H1 (cell line): ENCODE measurements at regions of chr14 and their contacts with region 1.

Region 1: DNA sequence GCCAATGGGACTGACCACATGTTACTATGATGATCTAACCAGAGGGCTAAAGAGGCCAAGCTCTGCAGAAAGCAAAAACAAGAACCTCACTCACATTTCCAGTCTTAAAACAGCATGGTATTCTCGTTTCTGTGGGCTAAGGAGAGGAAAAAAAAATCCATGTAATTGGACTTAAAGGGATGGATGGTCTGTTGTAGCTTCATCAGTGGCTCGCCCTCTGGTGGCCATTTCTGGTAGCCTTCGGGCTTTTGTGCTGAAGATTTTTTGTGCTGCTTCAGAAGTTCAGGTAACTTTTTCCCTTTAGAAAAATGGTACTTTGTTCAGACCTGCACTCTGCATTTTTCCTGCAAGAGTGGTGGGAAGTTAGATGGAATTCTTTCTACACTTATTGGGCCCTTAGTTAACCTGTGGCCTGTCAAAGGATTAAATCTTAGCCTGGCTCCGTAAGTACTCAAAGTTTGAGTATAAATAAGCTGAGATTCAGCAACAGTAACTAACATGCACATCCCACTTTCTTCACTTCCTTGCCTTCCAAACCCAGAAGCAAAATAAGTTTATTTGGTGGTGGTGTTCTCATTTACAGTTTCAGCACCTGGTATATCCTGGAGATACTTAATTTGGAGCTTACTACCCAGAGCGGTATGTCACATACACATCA is 22.3 kb downstream of the DCAF4 start:
- DNase-seq: peak in 1 of 2 experiments; percentile 87
- H3K4me3 ChIP-seq: no peak overlapping the region
- H3K27ac ChIP-seq: no peak overlapping the region
- H3K4me1 ChIP-seq: no peaks in the 10 kb centered on the region
- H3K27me3 ChIP-seq: no peaks in the 10 kb centered on the region
- CTCF ChIP-seq: peak; percentile 66 to 84 (median 67)
- EP300 ChIP-seq: no peak
- POLR2A ChIP-seq: no peak
- RAD21 ChIP-seq: peak; percentile 65 to 75

Region 2: GRCh38 chr14:72535485-72535884 is 413.1 kb before region 1 on chr14:
- CTCF ChIA-PET with region 1: no interaction called
- POLR2A ChIA-PET with region 1: no interaction called
- DNase-seq: no peak
- H3K4me3 ChIP-seq: no peak overlapping the region
- H3K27ac ChIP-seq: no peak overlapping the region
- H3K4me1 ChIP-seq: no peaks in the 10 kb centered on the region; a peak in 1 of 7 replicates
- H3K27me3 ChIP-seq: no peaks in the 10 kb centered on the region
- CTCF ChIP-seq: no peak
- EP300 ChIP-seq: no peak
- POLR2A ChIP-seq: no peak
- RAD21 ChIP-seq: no peak

Region 3: DNA sequence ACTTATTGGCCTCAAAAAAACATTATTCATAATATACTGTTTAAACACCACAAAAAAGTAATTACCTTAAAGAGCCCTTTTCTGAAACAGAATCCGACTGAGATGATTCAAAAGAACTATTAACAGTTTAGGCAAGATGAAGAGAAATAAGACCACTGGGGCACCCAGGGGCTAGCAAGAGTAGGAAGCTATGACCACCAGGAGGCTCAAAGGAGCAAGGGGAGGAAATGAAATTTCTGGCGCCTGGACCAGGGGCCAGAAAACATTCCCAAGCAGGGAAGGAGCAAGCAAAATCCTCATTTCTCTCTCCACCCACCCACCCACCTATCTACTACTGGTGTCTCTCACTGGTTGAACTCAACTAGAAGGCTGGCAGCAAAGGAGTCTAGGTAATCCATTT is 28.6 kb before region 1 on chr14:
- CTCF ChIA-PET with region 1: interaction called, 14 read pairs
- POLR2A ChIA-PET with region 1: no interaction called
- DNase-seq: no peak
- H3K4me3 ChIP-seq: no peak overlapping the region
- H3K27ac ChIP-seq: no peak overlapping the region
- H3K4me1 ChIP-seq: no peaks in the 10 kb centered on the region
- H3K27me3 ChIP-seq: peaks cover 0 to 3% (median under 1%) of the 10 kb centered on the region in 4 experiments; a peak in 2 of 7 replicates
- CTCF ChIP-seq: peak; percentile 43 to 64 (median 54)
- EP300 ChIP-seq: no peak
- POLR2A ChIP-seq: no peak
- RAD21 ChIP-seq: peak; percentile 27 to 63; a peak in 3 of 4 replicates

Region 4: DNA sequence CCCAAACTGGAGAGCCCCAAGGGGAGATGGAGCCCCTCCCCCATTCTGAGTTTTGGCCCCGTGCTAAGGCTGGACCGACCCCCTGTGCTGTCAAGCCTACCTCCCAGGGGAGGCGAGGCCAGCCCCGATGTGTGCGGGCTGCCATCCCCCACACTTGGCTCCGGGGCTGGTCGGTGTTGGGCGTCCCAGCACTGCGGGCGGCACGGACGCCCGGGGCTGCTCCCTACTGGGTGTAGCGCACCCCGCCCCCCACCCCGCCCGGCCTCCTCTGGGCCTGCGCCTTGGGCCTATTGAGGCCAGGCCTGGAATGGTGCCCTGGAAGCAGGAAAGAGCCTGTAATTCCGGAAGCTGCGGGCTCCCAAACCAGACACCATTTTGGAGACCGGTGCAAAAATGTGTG is 19.7 kb before region 1 on chr14:
- CTCF ChIA-PET with region 1: interaction called, 16 read pairs
- POLR2A ChIA-PET with region 1: no interaction called
- DNase-seq: no peak
- H3K4me3 ChIP-seq: no peak overlapping the region
- H3K27ac ChIP-seq: no peak overlapping the region
- H3K4me1 ChIP-seq: peaks cover 0 to 3% (median 2%) of the 10 kb centered on the region in 4 experiments; a peak in 5 of 7 replicates
- H3K27me3 ChIP-seq: peaks cover 0 to 10% (median 8%) of the 10 kb centered on the region in 4 experiments; a peak in 5 of 7 replicates
- CTCF ChIP-seq: no peak
- EP300 ChIP-seq: no peak
- POLR2A ChIP-seq: no peak
- RAD21 ChIP-seq: no peak

Region 5: DNA sequence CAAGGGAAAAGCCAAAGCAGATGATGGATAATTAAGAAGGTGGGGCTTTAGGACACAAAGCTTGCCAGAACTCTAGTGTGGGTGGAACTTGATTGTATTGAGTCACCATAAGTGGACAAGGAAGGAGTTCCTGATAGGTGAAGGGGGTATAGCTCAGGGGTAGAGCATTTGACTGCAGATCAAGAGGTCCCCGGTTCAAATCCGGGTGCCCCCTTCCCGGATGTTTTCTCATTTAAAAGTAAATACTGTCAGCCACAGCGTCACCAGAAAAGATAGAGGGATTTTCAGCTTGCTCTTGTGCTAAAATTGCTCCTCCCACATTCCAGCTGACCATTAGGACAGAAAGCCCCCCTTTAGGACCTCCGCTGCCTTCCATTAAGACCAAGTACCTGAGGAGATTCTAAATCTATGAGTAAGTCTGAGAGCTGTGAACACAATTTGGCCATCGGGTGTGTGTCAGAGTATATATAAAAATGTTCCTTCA is 14.3 kb after region 1 on chr14:
- CTCF ChIA-PET with region 1: interaction called, 25 read pairs
- POLR2A ChIA-PET with region 1: interaction called, 4 read pairs
- DNase-seq: peak; percentile 54 to 67
- H3K4me3 ChIP-seq: no peak overlapping the region
- H3K27ac ChIP-seq: no peak overlapping the region
- H3K4me1 ChIP-seq: no peaks in the 10 kb centered on the region
- H3K27me3 ChIP-seq: no peaks in the 10 kb centered on the region
- CTCF ChIP-seq: no peak
- EP300 ChIP-seq: no peak
- POLR2A ChIP-seq: no peak
- RAD21 ChIP-seq: no peak

Region 6: DNA sequence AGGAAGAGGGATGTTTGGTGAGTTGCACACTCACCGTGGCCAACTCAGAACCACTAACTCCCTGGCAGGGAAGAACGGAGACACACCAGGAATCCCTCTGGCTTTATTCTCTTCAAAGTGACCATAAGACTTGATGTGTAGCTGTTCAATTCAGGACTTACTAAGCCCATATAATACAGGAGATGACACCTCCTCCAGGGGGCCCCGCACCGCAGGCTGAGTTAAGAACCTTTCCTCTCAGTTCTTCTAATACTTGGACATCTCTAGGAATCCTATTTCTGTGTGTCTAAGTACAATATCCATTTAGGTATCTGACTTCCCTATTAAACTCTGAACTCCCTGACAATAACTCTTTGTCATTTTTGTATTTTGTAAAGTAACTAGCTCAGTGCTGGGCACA is 27.2 kb after region 1 on chr14:
- CTCF ChIA-PET with region 1: interaction called, 15 read pairs
- POLR2A ChIA-PET with region 1: no interaction called
- DNase-seq: no peak
- H3K4me3 ChIP-seq: no peak overlapping the region
- H3K27ac ChIP-seq: no peak overlapping the region
- H3K4me1 ChIP-seq: peaks cover under 1 to 5% (median 1%) of the 10 kb centered on the region in 4 experiments; a peak in 4 of 7 replicates
- H3K27me3 ChIP-seq: no peaks in the 10 kb centered on the region
- CTCF ChIP-seq: peak; percentile 13 to 27 (median 14); a peak in 3 of 4 replicates
- EP300 ChIP-seq: no peak
- POLR2A ChIP-seq: no peak
- RAD21 ChIP-seq: peak; percentile 32 to 51; a peak in 3 of 4 replicates

Region 7: DNA sequence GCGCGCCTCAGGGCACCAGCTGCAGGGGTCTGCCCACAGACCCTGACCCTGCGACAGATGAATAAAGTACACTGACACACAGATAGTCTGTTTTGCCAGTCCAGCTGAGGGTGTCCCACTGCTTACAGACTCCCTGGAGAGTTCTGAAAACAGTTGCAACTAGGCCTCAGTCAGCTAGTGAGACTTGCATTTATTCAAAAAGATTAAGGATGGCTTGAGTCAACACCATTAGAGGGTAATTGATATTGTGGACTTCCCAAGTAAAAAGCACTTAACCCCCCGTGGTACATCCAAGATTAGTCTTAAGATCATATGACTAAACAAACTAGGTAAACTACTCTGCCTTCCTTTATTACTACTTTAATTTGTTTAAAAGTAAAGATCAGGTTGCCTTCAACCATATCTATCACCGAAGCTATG is 176.6 kb after region 1 on chr14:
- CTCF ChIA-PET with region 1: no interaction called
- POLR2A ChIA-PET with region 1: no interaction called
- DNase-seq: no peak
- H3K4me3 ChIP-seq: peak overlapping the region in 1 of 4 experiments; percentile 6; a peak in 1 of 8 replicates
- H3K27ac ChIP-seq: no peak overlapping the region
- H3K4me1 ChIP-seq: peaks cover 3 to 18% (median 10%) of the 10 kb centered on the region in 4 experiments
- H3K27me3 ChIP-seq: no peaks in the 10 kb centered on the region
- CTCF ChIP-seq: no peak
- EP300 ChIP-seq: no peak
- POLR2A ChIP-seq: peak in 1 of 2 experiments; percentile 7; a peak in 1 of 3 replicates
- RAD21 ChIP-seq: no peak